Left cardiac atrium (tissue), 4 donors: ENCODE measurements at regions of chr22 and their contacts with region 1.

Region 1: DNA sequence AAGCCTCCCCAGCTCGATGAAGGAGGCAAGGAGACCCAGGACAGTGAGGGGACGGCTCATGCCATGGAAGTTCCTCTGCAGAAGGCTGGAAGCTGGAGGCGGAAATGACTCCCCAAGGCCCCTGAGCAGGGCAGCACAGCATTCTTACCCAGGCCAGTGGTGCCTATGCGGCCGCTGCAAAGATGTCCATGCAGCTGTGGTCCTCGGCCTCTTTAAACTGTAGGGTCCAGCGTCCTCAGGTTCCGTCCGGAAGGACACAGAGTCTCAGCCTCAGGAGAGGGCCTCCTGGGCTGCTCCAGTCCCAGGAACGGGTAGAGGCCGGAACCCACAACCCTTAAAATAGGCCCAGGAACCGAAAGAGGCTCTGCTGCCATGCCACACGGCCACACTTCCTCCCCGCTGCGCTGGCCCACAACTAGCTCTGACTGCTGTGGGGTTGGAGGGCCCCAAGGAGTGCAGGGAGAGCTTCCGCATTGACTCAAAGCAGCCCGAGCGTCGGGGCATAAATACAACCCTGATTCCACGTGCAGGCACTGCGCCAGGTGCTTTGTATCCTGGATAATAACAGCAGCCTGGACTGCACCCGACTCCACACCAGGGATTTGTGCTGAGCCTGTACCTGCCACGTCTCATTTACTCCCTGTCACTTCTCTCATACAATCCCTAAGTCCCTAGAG is 5.5 kb downstream of the KIAA0930 start:
- DNase-seq: no peak
- ATAC-seq: peak; percentile 48 to 56

Region 2: DNA sequence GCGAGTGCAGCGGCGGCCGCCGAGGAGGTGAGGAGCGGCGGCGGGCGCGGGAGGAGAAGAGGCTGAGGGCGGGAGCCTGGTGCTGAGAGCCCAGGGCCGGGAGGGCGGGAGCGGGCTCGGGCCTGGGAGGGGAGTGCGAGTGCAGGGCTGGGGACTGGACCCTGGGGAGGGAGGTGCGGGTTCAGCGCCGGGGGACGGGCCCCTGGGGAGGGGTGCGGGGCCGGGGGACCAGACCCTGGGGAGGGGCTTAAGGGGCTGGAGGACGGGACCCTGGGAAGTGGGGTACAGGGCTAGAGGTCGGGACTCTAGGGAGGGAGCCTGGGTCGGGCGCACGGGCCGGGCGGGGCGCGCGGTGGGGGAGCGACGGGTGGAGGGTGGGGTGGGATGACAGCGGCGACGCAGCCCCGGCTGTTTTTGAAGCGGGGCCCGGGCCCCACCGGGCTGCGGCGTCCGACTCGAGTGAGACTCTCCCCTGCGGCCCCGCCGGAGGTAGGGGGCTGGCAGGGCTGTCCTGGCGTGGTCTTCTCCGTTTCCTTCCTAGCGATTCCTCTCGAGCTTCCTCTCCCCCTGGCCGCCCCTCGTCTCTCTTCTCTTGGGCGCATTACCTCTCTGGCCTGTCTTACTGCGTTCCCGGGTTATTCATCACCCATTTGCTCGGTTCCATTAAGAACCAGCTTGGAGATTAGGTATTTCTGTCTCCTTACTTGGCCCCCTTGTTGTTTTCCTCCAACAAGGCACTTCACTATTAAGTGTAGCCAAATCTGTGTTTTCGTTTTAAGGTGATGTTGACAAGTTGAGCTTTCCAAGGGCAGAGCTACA is 70.8 kb before region 1 on chr22:
- intact Hi-C with region 1: loop called in 1 of 2 experiments (anchors 5 kb)
- DNase-seq: peak; percentile 32
- ATAC-seq: peak; percentile 58 to 68